AG04450 (cell line): ENCODE measurements at regions of chr15 and their contacts with region 1.

Region 1: GRCh38 chr15:34721802-34722795 is 32.7 kb downstream of the GJD2 start:
- DNase-seq: peak; percentile 3
- H3K4me3 ChIP-seq: peak overlapping the region; percentile 21; the same call in 1 of the 2 replicates
- H3K27ac ChIP-seq: no peak overlapping the region
- H3K27me3 ChIP-seq: no peaks in the 10 kb centered on the region
- CTCF ChIP-seq: no peak

Region 2: DNA sequence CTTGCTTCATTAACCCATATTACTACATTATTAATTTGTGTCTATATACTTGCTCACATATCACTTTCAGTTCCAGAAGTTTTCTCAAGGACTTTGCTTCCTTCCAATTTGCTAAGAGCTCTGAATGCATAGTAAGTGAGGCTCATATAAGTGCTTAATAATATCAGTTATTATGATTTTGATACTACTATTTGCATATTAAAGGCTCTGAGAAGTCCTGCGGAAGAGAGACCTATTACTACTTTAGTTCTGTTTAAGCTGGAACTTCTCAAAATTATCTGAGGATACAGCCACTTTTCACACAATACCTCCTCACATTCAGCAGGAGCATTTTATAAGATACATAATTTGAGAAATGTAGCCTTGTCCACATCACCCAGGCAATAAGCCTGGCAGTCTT is 48.9 kb before region 1 on chr15:
- CTCF ChIA-PET with region 1: no interaction called
- POLR2A ChIA-PET with region 1: no interaction called
- DNase-seq: no peak
- H3K4me3 ChIP-seq: no peak overlapping the region
- H3K27ac ChIP-seq: no peak overlapping the region
- H3K27me3 ChIP-seq: peaks cover 7% of the 10 kb centered on the region
- CTCF ChIP-seq: no peak

Region 3: DNA sequence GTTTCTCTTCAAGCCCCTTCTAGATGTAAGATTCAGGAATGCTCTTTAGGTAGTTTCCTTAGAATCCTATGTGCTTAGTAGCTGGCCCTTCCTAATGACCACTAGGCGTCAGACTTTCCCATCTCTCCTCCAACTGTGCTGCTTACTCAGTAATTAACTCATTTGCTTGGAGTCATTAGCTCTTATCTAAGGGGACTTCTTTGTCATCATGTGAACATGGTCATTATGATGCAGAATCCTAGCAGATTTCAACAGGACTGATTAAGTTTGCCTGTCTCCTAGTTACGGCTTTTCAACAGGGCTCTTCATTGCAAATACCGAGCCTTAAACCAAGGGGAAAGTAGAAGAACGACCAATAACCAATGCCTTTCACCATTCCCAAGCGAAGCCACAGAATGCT is 13.7 kb before region 1 on chr15:
- CTCF ChIA-PET with region 1: interaction called, 12 read pairs
- POLR2A ChIA-PET with region 1: no interaction called
- DNase-seq: peak; percentile 32
- H3K4me3 ChIP-seq: no peak overlapping the region
- H3K27ac ChIP-seq: no peak overlapping the region
- H3K27me3 ChIP-seq: no peaks in the 10 kb centered on the region
- CTCF ChIP-seq: peak; percentile 96